K562 (cell line): ENCODE measurements at regions of chr2 and their contacts with region 1.

Region 1: GRCh38 chr2:25131567-25132298 is 36.6 kb downstream of the POMC start:
- DNase-seq: peak in 2 of 4 experiments; percentile 52 to 57
- ATAC-seq: peak; percentile 9; the same call in 1 of the 3 replicates
- H3K4me3 ChIP-seq: no peak overlapping the region
- H3K27ac ChIP-seq: no peak overlapping the region
- H3K4me1 ChIP-seq: peaks cover 2 to 12% of the 10 kb centered on the region in 2 experiments; a peak in 4 of 5 replicates
- H3K27me3 ChIP-seq: peaks cover 48 to 78% of the 10 kb centered on the region in 2 experiments; a peak in 4 of 5 replicates
- CTCF ChIP-seq: no peak
- EP300 ChIP-seq: no peak
- POLR2A ChIP-seq: no peak
- RAD21 ChIP-seq: no peak

Region 2: DNA sequence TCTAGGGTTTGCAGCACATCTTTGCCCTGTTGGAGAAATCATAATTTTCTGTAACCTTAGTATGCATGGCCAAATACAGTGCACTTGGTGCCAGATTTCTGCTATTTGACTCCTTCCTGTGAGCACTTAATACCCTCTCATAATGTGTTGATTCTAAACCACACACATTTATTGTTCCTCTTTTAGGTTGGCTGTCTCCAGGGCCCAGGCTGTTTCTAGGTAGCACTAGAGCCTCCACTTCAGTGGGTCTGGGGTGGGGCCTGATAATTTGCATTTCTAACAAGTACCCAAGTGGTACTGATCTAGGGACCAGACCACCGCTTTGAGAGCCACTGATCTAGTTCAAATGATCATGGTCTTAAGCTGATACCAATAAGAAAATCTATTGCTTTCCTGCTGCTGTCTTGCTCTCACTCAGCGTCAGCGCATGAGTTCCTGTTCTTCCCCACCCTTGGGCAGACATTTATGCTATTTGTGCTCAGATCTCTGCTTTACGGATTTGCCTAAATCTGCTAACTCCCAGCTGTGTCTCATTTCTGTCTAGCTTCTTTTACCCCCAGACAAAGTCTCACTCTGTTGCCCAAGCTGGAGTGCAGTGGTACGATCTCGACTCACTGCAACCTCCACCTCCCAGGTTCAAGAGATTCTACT is 345.9 kb before region 1 on chr2:
- CTCF ChIA-PET with region 1: no interaction called
- POLR2A ChIA-PET with region 1: no interaction called
- in situ Hi-C with region 1: no loop called
- intact Hi-C with region 1: no loop called
- DNase-seq: no peak
- ATAC-seq: no peak
- H3K4me3 ChIP-seq: no peak overlapping the region
- H3K27ac ChIP-seq: no peak overlapping the region
- H3K4me1 ChIP-seq: peaks cover 0 to 7% of the 10 kb centered on the region in 2 experiments; a peak in 2 of 5 replicates
- H3K27me3 ChIP-seq: no peaks in the 10 kb centered on the region; a peak in 1 of 5 replicates
- CTCF ChIP-seq: no peak
- EP300 ChIP-seq: no peak
- POLR2A ChIP-seq: no peak
- RAD21 ChIP-seq: no peak

Region 3: GRCh38 chr2:24977631-24978030 is 154.1 kb before region 1 on chr2:
- CTCF ChIA-PET with region 1: interaction called, 33 read pairs
- POLR2A ChIA-PET with region 1: interaction called, 7 read pairs
- in situ Hi-C with region 1: loop called (anchors 5 kb)
- intact Hi-C with region 1: loop called (anchors 1 kb)
- DNase-seq: no peak
- ATAC-seq: no peak
- H3K4me3 ChIP-seq: no peak overlapping the region
- H3K27ac ChIP-seq: no peak overlapping the region
- H3K4me1 ChIP-seq: peaks cover 6 to 7% of the 10 kb centered on the region in 2 experiments; a peak in 4 of 5 replicates
- H3K27me3 ChIP-seq: peaks cover 5 to 7% of the 10 kb centered on the region in 2 experiments; a peak in 3 of 5 replicates
- CTCF ChIP-seq: no peak
- EP300 ChIP-seq: no peak
- POLR2A ChIP-seq: no peak
- RAD21 ChIP-seq: no peak

Region 4: DNA sequence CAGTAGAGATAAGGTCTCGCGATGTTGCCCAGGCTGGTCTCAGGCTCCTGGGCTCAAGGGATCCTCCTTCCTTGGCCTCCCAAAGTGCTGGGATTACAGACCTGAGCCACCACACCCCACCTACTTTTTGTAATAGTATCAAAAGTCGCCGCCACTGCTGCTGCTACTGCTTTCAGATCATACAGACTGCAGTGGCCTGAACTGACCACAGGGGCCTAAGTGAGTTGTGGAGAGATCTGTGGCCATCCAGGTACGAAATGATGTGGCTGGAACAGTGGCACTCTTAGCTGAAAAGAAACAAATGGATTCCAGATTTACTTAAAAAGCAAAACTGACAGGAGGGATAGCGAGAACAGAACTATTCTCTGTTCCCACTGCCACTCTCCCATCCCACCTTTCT is 69.5 kb after region 1 on chr2:
- CTCF ChIA-PET with region 1: no interaction called
- POLR2A ChIA-PET with region 1: no interaction called
- in situ Hi-C with region 1: no loop called
- intact Hi-C with region 1: loop called (anchors 1 kb)
- DNase-seq: peak; percentile 43 to 53 (median 50)
- ATAC-seq: peak; percentile 93
- H3K4me3 ChIP-seq: no peak overlapping the region
- H3K27ac ChIP-seq: no peak overlapping the region
- H3K4me1 ChIP-seq: peaks cover 0 to 11% of the 10 kb centered on the region in 2 experiments; a peak in 2 of 5 replicates
- H3K27me3 ChIP-seq: 0 out of 5 replicates have a peak, but pooled peaks cover 0 to 2% of the 10 kb centered on the region in 2 experiments
- CTCF ChIP-seq: peak; percentile 42 to 54 (median 48); a peak in 3 of 6 replicates
- EP300 ChIP-seq: no peak
- POLR2A ChIP-seq: no peak
- RAD21 ChIP-seq: peak in 1 of 2 experiments; percentile 33; a peak in 2 of 4 replicates

Region 5: GRCh38 chr2:25215948-25216679 is 84.4 kb after region 1 on chr2:
- CTCF ChIA-PET with region 1: no interaction called
- POLR2A ChIA-PET with region 1: no interaction called
- in situ Hi-C with region 1: no loop called
- intact Hi-C with region 1: no loop called
- DNase-seq: no peak
- ATAC-seq: no peak
- H3K4me3 ChIP-seq: no peak overlapping the region
- H3K27ac ChIP-seq: no peak overlapping the region
- H3K4me1 ChIP-seq: peaks cover 2 to 5% of the 10 kb centered on the region in 2 experiments; a peak in 2 of 5 replicates
- H3K27me3 ChIP-seq: no peaks in the 10 kb centered on the region
- CTCF ChIP-seq: no peak
- EP300 ChIP-seq: no peak
- POLR2A ChIP-seq: no peak
- RAD21 ChIP-seq: no peak